ENCODE measurements at regions of chr9 and their contacts with region 1.

Region 1: DNA sequence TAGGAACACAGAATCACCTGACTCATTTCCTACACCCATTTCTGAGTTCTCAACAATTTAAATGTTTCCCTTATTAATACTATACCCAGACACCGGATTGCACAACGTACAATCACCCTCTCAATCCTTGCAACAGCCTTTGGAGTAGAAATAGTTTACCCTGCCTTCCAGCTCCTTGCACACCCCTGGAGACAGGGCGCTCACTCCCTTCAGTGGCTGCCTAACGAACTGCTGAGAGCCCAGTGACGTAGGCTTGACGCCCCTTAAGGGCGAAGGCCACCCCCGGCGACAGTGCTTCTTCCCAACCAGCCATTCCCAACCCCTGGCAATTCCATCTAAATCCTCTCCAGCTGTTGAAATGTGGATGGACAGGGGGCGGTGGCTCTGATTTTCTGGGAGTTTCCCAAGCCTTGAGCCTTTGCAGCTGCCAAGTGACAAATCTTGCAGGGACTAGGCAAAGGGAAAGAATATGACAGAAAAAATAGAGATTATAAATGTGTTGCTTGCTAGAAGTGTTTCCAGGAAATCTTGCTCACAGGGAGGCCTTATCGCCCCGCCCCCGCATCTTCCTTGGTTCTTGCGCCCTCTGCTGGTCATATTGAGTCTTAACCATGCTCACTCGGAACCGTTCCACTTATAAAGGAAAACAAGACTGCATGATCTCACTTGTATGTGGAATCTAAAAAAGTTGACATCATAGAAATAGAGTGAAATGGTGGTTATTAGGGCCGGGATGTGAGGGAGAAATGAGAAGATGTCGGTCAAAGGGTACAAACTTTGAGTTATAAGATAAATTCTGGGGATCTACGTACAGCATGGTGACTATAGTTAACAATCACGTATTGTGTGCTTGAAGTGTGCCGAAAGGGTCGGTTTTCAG is 7.6 kb upstream of the BARX1 start:
- DNase-seq: peak; percentile 50 to 86 (median 80)
- ATAC-seq: peak; percentile 84
- H3K4me3 ChIP-seq: no peak overlapping the region
- H3K4me3 Mint-ChIP-seq: peak overlapping the region; percentile 1
- H3K27ac ChIP-seq: no peak overlapping the region
- H3K27ac Mint-ChIP-seq: no peak overlapping the region
- H3K4me1 ChIP-seq: peaks cover 31% of the 10 kb centered on the region
- H3K4me1 Mint-ChIP-seq: peaks cover 27% of the 10 kb centered on the region
- H3K27me3 ChIP-seq: peaks cover 30 to 33% of the 10 kb centered on the region in 2 experiments
- H3K27me3 Mint-ChIP-seq: peaks cover 39% of the 10 kb centered on the region
- CTCF ChIP-seq: peak; percentile 88

Region 2: GRCh38 chr9:93159601-93160471 is 803.0 kb before region 1 on chr9:
- CTCF ChIA-PET with region 1: interaction called, 3 read pairs
- POLR2A ChIA-PET with region 1: no interaction called
- intact Hi-C with region 1: loop called in 1 of 2 experiments (anchors 1 kb)
- DNase-seq: peak; percentile 43 to 81 (median 71)
- ATAC-seq: peak; percentile 91
- H3K4me3 ChIP-seq: no peak overlapping the region
- H3K4me3 Mint-ChIP-seq: no peak overlapping the region
- H3K27ac ChIP-seq: no peak overlapping the region
- H3K27ac Mint-ChIP-seq: no peak overlapping the region
- H3K4me1 ChIP-seq: peaks cover 6% of the 10 kb centered on the region
- H3K4me1 Mint-ChIP-seq: peaks cover 6% of the 10 kb centered on the region
- H3K27me3 ChIP-seq: peaks cover 0 to 5% of the 10 kb centered on the region in 2 experiments
- H3K27me3 Mint-ChIP-seq: no peaks in the 10 kb centered on the region
- CTCF ChIP-seq: peak; percentile 90

Region 3: DNA sequence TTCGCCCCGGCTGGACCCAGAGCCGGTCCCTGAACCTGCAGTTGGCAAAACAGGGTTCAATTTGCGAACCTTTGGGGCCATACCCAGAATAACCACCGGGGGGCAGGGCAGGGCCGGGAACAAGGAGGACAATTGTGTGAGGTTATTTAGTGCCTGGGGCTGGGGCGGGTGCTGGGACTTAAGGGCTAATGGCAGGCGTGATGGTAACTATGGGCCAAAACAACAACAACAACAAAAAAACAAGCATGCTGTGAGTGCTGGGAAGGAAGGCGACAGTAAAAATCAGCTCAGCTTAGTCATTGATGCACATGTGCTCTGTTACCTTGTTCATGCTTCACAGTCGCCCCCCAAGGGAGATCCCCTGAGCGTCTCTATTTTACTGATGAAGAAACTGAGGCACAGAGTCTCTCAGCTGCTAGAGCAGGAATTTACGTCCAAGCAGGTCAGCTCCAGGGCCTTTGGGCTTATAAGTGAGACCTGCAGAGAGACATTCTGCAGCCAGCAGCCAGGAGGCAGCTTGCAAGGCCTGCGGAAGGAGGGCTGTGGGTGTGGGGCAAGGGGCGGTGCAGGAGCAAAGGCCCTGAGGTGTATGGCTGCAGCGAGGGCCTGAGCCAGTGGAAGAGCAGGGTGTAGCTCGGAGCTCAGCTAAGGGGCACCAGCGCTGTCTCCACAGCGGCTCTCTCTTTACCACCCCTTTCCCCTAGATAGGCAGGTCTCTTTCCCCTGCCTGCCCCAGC is 280.4 kb before region 1 on chr9:
- CTCF ChIA-PET with region 1: interaction called, 48 read pairs
- POLR2A ChIA-PET with region 1: no interaction called
- intact Hi-C with region 1: loop called in 1 of 2 experiments (anchors 1 kb)
- DNase-seq: peak; percentile 27 to 73 (median 47)
- ATAC-seq: peak; percentile 62
- H3K4me3 ChIP-seq: no peak overlapping the region
- H3K4me3 Mint-ChIP-seq: no peak overlapping the region
- H3K27ac ChIP-seq: no peak overlapping the region
- H3K27ac Mint-ChIP-seq: no peak overlapping the region
- H3K4me1 ChIP-seq: no peaks in the 10 kb centered on the region
- H3K4me1 Mint-ChIP-seq: no peaks in the 10 kb centered on the region
- H3K27me3 ChIP-seq: no peaks in the 10 kb centered on the region
- H3K27me3 Mint-ChIP-seq: peaks cover 8% of the 10 kb centered on the region
- CTCF ChIP-seq: peak; percentile 66

Region 4: DNA sequence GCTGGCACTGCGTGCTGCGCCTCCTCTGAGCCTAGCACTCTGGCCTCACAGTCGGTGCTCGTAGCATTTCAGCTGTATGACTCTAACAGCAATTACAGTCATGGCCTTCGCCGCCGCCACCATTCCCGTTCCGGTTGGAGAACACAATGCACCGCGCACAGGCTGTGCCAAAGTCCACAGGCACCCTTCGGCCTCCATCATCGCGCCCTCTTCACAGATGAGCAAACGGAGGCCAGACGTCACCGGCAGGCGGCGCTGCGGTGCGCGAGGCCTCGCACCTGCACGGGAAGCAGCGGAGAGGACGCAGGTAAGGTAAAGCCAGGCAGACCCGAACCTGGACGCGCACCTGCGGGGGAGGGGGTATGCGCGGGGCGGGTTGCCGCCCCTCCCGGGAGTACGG is 136.6 kb before region 1 on chr9:
- CTCF ChIA-PET with region 1: interaction called, 3 read pairs
- POLR2A ChIA-PET with region 1: no interaction called
- intact Hi-C with region 1: loop called (anchors 1 kb)
- DNase-seq: peak in 7 of 9 experiments; percentile 13 to 41 (median 34)
- ATAC-seq: no peak
- H3K4me3 ChIP-seq: no peak overlapping the region
- H3K4me3 Mint-ChIP-seq: peak overlapping the region; percentile 63
- H3K27ac ChIP-seq: no peak overlapping the region
- H3K27ac Mint-ChIP-seq: no peak overlapping the region
- H3K4me1 ChIP-seq: peaks cover 11% of the 10 kb centered on the region
- H3K4me1 Mint-ChIP-seq: peaks cover 12% of the 10 kb centered on the region
- H3K27me3 ChIP-seq: peaks cover 5 to 12% of the 10 kb centered on the region in 2 experiments
- H3K27me3 Mint-ChIP-seq: peaks cover 49% of the 10 kb centered on the region
- CTCF ChIP-seq: peak; percentile 52

Region 5: GRCh38 chr9:93949073-93949693 is 13.6 kb before region 1 on chr9:
- CTCF ChIA-PET with region 1: interaction called, 10 read pairs
- POLR2A ChIA-PET with region 1: no interaction called
- intact Hi-C with region 1: no loop called
- DNase-seq: no peak
- ATAC-seq: no peak
- H3K4me3 ChIP-seq: no peak overlapping the region
- H3K4me3 Mint-ChIP-seq: no peak overlapping the region
- H3K27ac ChIP-seq: no peak overlapping the region
- H3K27ac Mint-ChIP-seq: no peak overlapping the region
- H3K4me1 ChIP-seq: peaks cover 47% of the 10 kb centered on the region
- H3K4me1 Mint-ChIP-seq: peaks cover 47% of the 10 kb centered on the region
- H3K27me3 ChIP-seq: peaks cover 33 to 50% of the 10 kb centered on the region in 2 experiments
- H3K27me3 Mint-ChIP-seq: peaks cover 81% of the 10 kb centered on the region
- CTCF ChIP-seq: no peak

Measured in CD8-positive, alpha-beta T cell (primary cell).